HEK293 (cell line): ENCODE measurements at regions of chr5 and their contacts with region 1.

Region 1: GRCh38 chr5:172764849-172765765 is 5.9 kb downstream of the DUSP1 start:
- H3K4me3 ChIP-seq: peak overlapping the region; percentile 25
- H3K27ac ChIP-seq: peak overlapping the region; percentile 68
- H3K4me1 ChIP-seq: peaks cover 22% of the 10 kb centered on the region; the same call in 1 of the 2 replicates
- CTCF ChIP-seq: peak; percentile 36; the same call in 1 of the 2 replicates

Region 2: DNA sequence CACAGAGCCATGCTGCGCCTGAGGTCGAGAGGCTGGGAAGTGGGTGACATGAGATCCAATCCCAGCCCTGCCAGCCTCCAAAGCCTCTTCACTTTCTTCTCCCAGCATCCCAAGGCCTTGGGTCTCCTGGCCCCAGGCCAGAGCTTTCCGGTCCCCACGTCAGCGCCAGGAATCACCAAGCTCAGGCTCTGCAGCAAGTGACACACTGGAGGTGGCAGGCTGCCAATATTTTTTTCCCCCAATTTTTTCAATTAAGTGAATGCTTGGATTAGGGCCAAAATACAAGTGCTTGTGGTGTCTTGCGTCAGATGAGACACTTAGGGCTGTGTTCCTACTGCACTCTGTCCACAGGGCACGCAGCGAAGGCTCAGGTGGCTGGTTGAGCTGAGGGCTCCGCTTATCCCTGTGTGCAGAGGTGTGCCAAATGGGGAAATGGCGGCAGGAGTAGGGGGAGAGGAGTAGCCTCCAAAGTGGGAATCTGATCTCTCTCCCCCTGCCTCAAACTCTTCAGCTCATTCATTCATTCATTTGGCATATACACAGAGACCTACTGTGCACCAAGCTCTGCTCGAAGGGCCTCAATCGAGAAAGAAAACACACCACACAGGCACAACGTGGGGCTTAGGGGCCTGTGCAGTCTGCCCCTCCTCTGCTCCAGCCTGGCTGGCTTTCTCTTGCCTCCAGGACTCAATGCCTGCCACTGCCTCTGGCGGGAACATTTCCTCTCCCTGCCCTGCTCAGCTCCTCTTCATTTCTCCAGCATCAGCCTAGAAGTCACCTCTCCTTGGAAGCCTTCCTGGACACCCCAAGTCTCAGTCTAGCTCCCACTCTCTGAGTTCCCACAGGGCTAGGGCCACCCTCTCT is 327.4 kb before region 1 on chr5:
- CTCF ChIA-PET with region 1: no interaction called
- POLR2A ChIA-PET with region 1: no interaction called
- H3K4me3 ChIP-seq: no peak overlapping the region
- H3K27ac ChIP-seq: peak overlapping the region; percentile 43; the same call in 1 of the 2 replicates
- H3K4me1 ChIP-seq: peaks cover 13% of the 10 kb centered on the region
- CTCF ChIP-seq: no peak

Region 3: GRCh38 chr5:172902497-172903200 is 137.5 kb after region 1 on chr5:
- CTCF ChIA-PET with region 1: interaction called, 5 read pairs
- POLR2A ChIA-PET with region 1: interaction called, 89 read pairs
- H3K4me3 ChIP-seq: no peak overlapping the region
- H3K27ac ChIP-seq: no peak overlapping the region
- H3K4me1 ChIP-seq: peaks cover 14% of the 10 kb centered on the region; the same call in 1 of the 2 replicates
- CTCF ChIP-seq: peak; percentile 40

Region 4: GRCh38 chr5:173051746-173052145 is 286.6 kb after region 1 on chr5:
- CTCF ChIA-PET with region 1: no interaction called
- POLR2A ChIA-PET with region 1: no interaction called
- H3K4me3 ChIP-seq: no peak overlapping the region
- H3K27ac ChIP-seq: no peak overlapping the region
- H3K4me1 ChIP-seq: no peaks in the 10 kb centered on the region
- CTCF ChIP-seq: no peak

Region 5: GRCh38 chr5:173235499-173236394 is 470.6 kb after region 1 on chr5:
- CTCF ChIA-PET with region 1: no interaction called
- POLR2A ChIA-PET with region 1: interaction called, 11 read pairs
- H3K4me3 ChIP-seq: no peak overlapping the region
- H3K27ac ChIP-seq: no peak overlapping the region; the same call in 1 of the 2 replicates
- H3K4me1 ChIP-seq: peaks cover 5% of the 10 kb centered on the region; the same call in 1 of the 2 replicates
- CTCF ChIP-seq: 0 out of 2 replicates have a peak, but pooled peaks have one; percentile 9